Activated CD4-positive, alpha-beta T cell treated with anti-CD3 and anti-CD28 coated beads, Interleukin-2, amount 10 ng/mL, durations not matched to agents 24 days and 14 days (primary cell): ENCODE measurements at regions of chr3 and their contacts with region 1.

Region 1: DNA sequence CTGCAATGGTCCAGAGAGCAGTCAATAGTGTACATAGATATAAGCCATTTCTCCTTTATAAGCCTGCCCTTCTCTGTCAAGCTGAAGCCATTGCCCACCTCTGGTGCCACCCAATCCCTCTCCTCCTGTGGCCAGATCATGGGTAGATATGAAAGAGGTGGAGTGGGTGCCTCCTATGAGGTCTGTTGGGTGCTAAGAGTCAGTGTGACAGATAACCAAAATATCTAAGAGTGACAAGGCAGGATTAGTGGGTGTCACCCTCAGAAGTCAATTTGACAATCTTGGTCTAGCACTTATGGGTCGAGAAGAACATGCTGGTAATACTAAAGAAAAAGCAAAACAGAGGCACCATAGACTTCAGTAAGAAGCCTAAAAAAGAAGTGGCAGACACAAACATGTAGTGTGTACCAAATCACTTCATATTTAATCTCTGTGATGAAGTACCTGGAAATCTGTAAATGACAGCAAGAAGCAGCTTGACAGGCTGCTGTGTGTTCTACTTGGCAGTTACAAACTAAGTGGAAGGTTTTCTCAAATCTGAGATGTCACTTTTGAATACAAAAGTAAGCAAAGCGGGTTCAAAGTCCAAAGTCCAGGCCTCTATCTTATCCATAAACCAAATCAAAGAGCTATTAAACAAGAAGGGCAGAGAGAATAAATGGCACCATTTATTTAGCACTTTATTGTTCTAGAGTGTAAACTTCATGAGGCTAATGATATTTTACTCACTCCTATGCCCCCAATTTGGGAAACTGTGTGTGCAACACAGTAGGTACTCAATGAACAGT is 118.9 kb upstream of the EOMES start:
- DNase-seq: no peak
- H3K4me3 Mint-ChIP-seq: no peak overlapping the region
- H3K27ac Mint-ChIP-seq: no peak overlapping the region
- H3K4me1 Mint-ChIP-seq: peaks cover 5% of the 10 kb centered on the region
- H3K27me3 Mint-ChIP-seq: no peaks in the 10 kb centered on the region

Region 2: DNA sequence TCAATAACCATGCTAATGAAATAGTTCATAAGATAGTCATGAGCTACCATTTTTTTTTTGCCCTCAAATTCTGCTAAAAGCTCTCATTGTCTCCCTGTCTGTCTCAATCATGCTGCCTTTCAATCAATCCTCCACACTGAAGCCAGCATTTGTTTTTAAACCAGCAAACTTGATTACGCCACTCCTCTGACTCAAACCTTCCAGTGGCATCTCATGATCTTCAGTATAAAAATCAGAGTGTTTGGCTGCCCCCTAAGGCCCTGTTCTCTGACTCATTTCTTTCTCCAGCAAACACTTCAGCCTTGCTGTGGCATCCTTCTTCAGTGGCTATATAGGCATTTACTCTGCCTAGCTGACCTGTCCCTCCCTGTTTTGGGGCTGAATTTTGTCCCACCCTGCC is 82.9 kb before region 1 on chr3:
- intact Hi-C with region 1: loop called (anchors 10 kb)
- DNase-seq: peak; percentile 57
- H3K4me3 Mint-ChIP-seq: no peak overlapping the region
- H3K27ac Mint-ChIP-seq: no peak overlapping the region
- H3K4me1 Mint-ChIP-seq: peaks cover 10% of the 10 kb centered on the region
- H3K27me3 Mint-ChIP-seq: no peaks in the 10 kb centered on the region

Region 3: GRCh38 chr3:27861046-27862036 is 20.3 kb after region 1 on chr3:
- intact Hi-C with region 1: no loop called
- DNase-seq: peak; percentile 83
- H3K4me3 Mint-ChIP-seq: peak overlapping the region; percentile 52
- H3K27ac Mint-ChIP-seq: peak overlapping the region; percentile 87
- H3K4me1 Mint-ChIP-seq: peaks cover 19% of the 10 kb centered on the region
- H3K27me3 Mint-ChIP-seq: no peaks in the 10 kb centered on the region

Region 4: GRCh38 chr3:27905625-27906024 is 64.6 kb after region 1 on chr3:
- intact Hi-C with region 1: loop called (anchors 10 kb)
- DNase-seq: no peak
- H3K4me3 Mint-ChIP-seq: no peak overlapping the region
- H3K27ac Mint-ChIP-seq: no peak overlapping the region
- H3K4me1 Mint-ChIP-seq: peaks cover 20% of the 10 kb centered on the region
- H3K27me3 Mint-ChIP-seq: no peaks in the 10 kb centered on the region

Region 5: GRCh38 chr3:28699283-28699682 is 858.3 kb after region 1 on chr3:
- intact Hi-C with region 1: no loop called
- DNase-seq: no peak
- H3K4me3 Mint-ChIP-seq: no peak overlapping the region
- H3K27ac Mint-ChIP-seq: no peak overlapping the region
- H3K4me1 Mint-ChIP-seq: no peaks in the 10 kb centered on the region
- H3K27me3 Mint-ChIP-seq: no peaks in the 10 kb centered on the region